Caco-2 (cell line): ENCODE measurements at regions of chr12 and their contacts with region 1.

Region 1: GRCh38 chr12:100058482-100059029 is 73.8 kb upstream of the ANKS1B start:
- DNase-seq: no peak
- H3K4me3 ChIP-seq: no peak overlapping the region
- H3K4me3 Mint-ChIP-seq: no peak overlapping the region
- H3K27ac Mint-ChIP-seq: no peak overlapping the region
- H3K4me1 ChIP-seq: no peaks in the 10 kb centered on the region
- H3K4me1 Mint-ChIP-seq: peaks cover under 1% of the 10 kb centered on the region
- H3K27me3 ChIP-seq: no peaks in the 10 kb centered on the region
- H3K27me3 Mint-ChIP-seq: no peaks in the 10 kb centered on the region
- CTCF ChIP-seq: no peak

Region 2: DNA sequence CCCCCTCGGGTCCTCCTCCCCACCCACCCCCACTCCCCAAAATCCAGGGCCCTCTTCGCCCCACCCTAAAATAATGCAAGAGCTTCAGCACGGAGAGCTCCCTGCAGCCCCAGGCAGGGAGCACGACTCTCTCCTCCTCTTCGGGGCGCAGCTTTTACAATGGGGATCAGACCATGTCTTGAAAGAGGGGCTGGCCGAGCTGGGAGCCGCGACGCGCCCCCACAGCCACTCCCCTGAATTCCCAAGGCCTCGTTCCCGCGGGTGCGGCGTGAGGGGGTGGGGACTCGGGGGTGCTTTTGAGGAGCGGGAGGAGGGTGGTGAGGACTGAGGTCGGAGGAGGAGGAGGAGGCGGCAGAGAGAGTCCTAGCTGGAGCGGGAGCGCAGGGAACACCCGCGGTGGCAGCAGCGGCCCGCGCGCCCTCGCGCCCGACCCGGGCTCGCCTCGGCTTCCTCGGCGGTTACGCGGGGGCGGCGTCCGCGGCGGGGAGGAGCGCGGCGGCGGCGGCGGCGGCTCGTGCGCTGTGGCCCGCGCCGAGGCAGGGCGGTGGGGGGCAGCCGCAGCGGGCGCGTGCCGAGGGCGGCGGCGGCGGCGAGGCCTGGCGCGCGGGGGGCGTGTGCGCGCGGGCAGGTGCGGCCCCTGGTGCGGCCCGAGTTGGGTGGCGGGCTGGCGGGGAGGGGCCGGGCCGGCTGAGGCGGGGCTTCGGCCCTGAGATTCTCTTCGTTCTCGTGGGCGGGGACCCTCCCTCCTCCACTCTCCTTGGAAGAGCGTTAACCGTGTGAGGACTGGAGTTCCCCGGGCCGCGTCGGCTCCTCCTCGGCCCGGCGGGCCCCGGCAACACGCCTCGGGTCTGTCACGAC is 74.1 kb before region 1 on chr12 and contains the start of gene ANKS1B:
- CTCF ChIA-PET with region 1: no interaction called
- POLR2A ChIA-PET with region 1: no interaction called
- intact Hi-C with region 1: no loop called
- DNase-seq: peak; percentile 62 to 74
- H3K4me3 ChIP-seq: peak within 1 kb of the TSS; percentile 45
- H3K4me3 Mint-ChIP-seq: peak within 1 kb of the TSS; percentile 85
- H3K27ac Mint-ChIP-seq: no peak within 1 kb of the TSS
- H3K4me1 ChIP-seq: 0 out of 2 replicates have a peak, but pooled peaks cover 6% of the 10 kb centered on the region
- H3K4me1 Mint-ChIP-seq: peaks cover 7% of the 10 kb centered on the region
- H3K27me3 ChIP-seq: peaks cover 2% of the 10 kb centered on the region; the same call in 1 of the 2 replicates
- H3K27me3 Mint-ChIP-seq: peaks cover 14% of the 10 kb centered on the region
- CTCF ChIP-seq: no peak
- total RNA-seq, gene ANKS1B: 0.61 and 1.1 TPM in 2 replicates

Region 3: GRCh38 chr12:100215209-100215608 is 156.7 kb after region 1 on chr12:
- CTCF ChIA-PET with region 1: no interaction called
- POLR2A ChIA-PET with region 1: no interaction called
- intact Hi-C with region 1: loop called (anchors 5 kb)
- DNase-seq: no peak
- H3K4me3 ChIP-seq: no peak overlapping the region
- H3K4me3 Mint-ChIP-seq: peak overlapping the region; percentile 16
- H3K27ac Mint-ChIP-seq: peak overlapping the region; percentile 61
- H3K4me1 ChIP-seq: peaks cover 60% of the 10 kb centered on the region
- H3K4me1 Mint-ChIP-seq: peaks cover 24% of the 10 kb centered on the region
- H3K27me3 ChIP-seq: no peaks in the 10 kb centered on the region
- H3K27me3 Mint-ChIP-seq: no peaks in the 10 kb centered on the region
- CTCF ChIP-seq: no peak